Calu3 (cell line): ENCODE measurements at regions of chr12 and their contacts with region 1.

Region 1: GRCh38 chr12:74043324-74043723 is 494.3 kb upstream of the ATXN7L3B start:
- DNase-seq: peak; percentile 54
- H3K4me3 Mint-ChIP-seq: no peak overlapping the region
- H3K27ac Mint-ChIP-seq: peak overlapping the region; percentile 85
- H3K4me1 Mint-ChIP-seq: peaks cover 29% of the 10 kb centered on the region
- H3K27me3 Mint-ChIP-seq: no peaks in the 10 kb centered on the region
- CTCF ChIP-seq: no peak

Region 2: DNA sequence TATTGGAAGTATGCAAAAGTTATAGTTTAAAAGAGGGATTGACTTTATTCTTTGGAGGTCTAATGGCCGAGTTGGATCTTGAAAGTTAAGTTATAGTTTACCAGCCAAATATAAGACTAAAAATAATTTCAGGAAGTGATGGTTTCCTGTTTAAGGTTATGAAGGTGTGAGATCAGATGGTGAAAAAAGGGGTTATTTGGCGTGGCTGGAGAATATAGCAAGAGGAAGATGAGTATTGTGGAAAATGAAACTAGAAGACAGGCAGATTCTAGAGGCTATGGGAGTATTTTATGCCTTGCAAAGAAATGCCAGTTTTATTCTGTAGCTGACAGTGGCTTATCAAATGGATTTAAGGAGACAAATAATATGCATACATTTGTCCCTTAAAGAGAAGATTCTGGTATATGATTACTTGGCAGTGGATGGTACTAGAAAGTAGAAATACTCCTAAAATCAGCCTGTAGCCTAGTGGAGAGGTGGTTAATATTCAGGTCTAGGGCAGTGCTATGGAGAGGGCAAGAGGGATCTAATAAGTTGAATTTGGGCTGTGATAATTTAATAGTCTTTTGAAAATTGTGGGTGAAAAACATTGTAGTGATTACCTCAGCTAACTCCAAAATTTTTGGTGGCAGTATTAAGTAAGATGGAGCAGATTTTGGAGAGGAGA is 597.5 kb before region 1 on chr12:
- CTCF ChIA-PET with region 1: no interaction called
- intact Hi-C with region 1: no loop called
- DNase-seq: no peak
- H3K4me3 Mint-ChIP-seq: no peak overlapping the region
- H3K27ac Mint-ChIP-seq: no peak overlapping the region
- H3K4me1 Mint-ChIP-seq: no peaks in the 10 kb centered on the region
- H3K27me3 Mint-ChIP-seq: no peaks in the 10 kb centered on the region
- CTCF ChIP-seq: no peak

Region 3: GRCh38 chr12:74021937-74022336 is 21.4 kb before region 1 on chr12:
- CTCF ChIA-PET with region 1: no interaction called
- intact Hi-C with region 1: loop called (anchors 2 kb)
- DNase-seq: peak; percentile 85
- H3K4me3 Mint-ChIP-seq: no peak overlapping the region
- H3K27ac Mint-ChIP-seq: no peak overlapping the region
- H3K4me1 Mint-ChIP-seq: peaks cover 10% of the 10 kb centered on the region
- H3K27me3 Mint-ChIP-seq: no peaks in the 10 kb centered on the region
- CTCF ChIP-seq: peak; percentile 64

Region 4: GRCh38 chr12:74250891-74251290 is 207.6 kb after region 1 on chr12:
- CTCF ChIA-PET with region 1: no interaction called
- intact Hi-C with region 1: no loop called
- DNase-seq: no peak
- H3K4me3 Mint-ChIP-seq: no peak overlapping the region
- H3K27ac Mint-ChIP-seq: no peak overlapping the region
- H3K4me1 Mint-ChIP-seq: peaks cover 11% of the 10 kb centered on the region
- H3K27me3 Mint-ChIP-seq: no peaks in the 10 kb centered on the region
- CTCF ChIP-seq: no peak

Region 5: GRCh38 chr12:74663958-74664357 is 620.6 kb after region 1 on chr12:
- CTCF ChIA-PET with region 1: no interaction called
- intact Hi-C with region 1: no loop called
- DNase-seq: no peak
- H3K4me3 Mint-ChIP-seq: no peak overlapping the region
- H3K27ac Mint-ChIP-seq: no peak overlapping the region
- H3K4me1 Mint-ChIP-seq: no peaks in the 10 kb centered on the region
- H3K27me3 Mint-ChIP-seq: no peaks in the 10 kb centered on the region
- CTCF ChIP-seq: no peak